Upper lobe of right lung (tissue), 1 donor: ENCODE measurements at regions of chr17 and their contacts with region 1.

Region 1: DNA sequence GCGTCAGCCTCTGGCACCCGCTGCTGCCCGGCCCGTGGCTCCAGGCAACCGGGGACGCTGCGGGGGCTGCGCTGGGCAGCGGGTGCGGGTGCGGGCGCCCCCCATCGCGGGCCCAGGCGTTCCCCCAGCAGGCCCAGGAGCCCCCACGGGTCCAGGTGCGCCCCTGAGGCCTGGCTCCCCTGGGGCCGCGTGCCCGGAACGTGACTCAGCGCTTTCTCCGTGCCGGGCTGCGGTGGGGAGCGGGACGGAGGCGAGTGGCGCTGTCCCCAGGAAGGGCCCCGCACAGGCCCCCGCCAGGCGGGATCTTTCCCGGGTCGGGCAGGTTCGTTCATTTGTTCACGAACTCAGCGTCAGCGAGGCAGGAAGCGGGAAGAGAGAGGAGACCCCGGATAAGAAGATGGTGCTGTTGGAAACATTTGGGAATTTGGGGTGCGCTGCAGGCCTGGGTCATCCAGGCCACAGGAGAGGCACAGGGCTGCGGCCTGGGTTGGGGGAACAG is 18.4 kb upstream of the EXOC7 start:
- DNase-seq: no peak
- ATAC-seq: peak; percentile 30
- H3K4me3 ChIP-seq: peak overlapping the region; percentile 37
- H3K27ac ChIP-seq: peak overlapping the region; percentile 17
- H3K4me1 ChIP-seq: peaks cover 6% of the 10 kb centered on the region
- H3K27me3 ChIP-seq: no peaks in the 10 kb centered on the region
- CTCF ChIP-seq: no peak

Region 2: GRCh38 chr17:75978938-75979704 is 142.9 kb before region 1 on chr17 and contains the starts of genes ACOX1 and TEN1:
- intact Hi-C with region 1: no loop called
- DNase-seq: peak; percentile 99
- ATAC-seq: peak; percentile 96
- H3K4me3 ChIP-seq: peak within 1 kb of the TSS; percentile 93
- H3K27ac ChIP-seq: peak within 1 kb of the TSS; percentile 100
- H3K4me1 ChIP-seq: peaks cover 71% of the 10 kb centered on the region
- H3K27me3 ChIP-seq: no peaks in the 10 kb centered on the region
- CTCF ChIP-seq: peak; percentile 42
- total RNA-seq, gene ACOX1: 75.2 TPM
- total RNA-seq, gene TEN1: 10.9 TPM

Region 3: GRCh38 chr17:76182016-76182764 is 60.2 kb after region 1 on chr17:
- intact Hi-C with region 1: loop called (anchors 10 kb)
- DNase-seq: peak; percentile 89
- ATAC-seq: peak; percentile 98
- H3K4me3 ChIP-seq: no peak overlapping the region
- H3K27ac ChIP-seq: no peak overlapping the region
- H3K4me1 ChIP-seq: no peaks in the 10 kb centered on the region
- H3K27me3 ChIP-seq: no peaks in the 10 kb centered on the region
- CTCF ChIP-seq: peak; percentile 91

Region 4: DNA sequence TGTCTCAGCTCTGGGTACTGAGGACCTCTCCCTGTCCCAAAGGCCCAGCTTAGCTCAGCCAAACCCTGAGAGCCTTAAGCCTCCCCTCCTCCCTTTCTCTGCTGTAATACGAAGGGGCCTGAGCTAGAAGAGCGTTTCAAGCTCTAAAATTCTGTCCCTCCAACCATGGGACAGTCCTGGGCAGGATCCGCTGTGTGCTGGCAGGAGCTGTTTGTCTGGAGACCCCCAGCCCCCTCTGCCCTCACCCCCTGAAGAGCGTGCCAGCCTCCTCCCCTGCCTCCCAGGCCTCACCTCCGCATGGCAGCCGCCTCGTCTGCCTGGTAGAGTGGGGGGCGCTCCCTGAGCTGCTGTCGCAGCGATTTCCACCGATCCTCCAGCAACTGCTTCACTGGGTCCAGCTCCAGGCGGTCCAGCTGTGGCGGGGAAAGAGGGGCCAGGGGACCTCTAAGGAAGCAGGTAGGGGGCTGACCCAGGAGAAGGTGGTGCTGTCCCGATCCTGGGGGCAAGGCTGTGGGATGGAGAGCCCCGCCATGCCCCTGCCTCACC is 157.8 kb after region 1 on chr17:
- intact Hi-C with region 1: loop called (anchors 5 kb)
- DNase-seq: no peak
- ATAC-seq: no peak
- H3K4me3 ChIP-seq: no peak overlapping the region
- H3K27ac ChIP-seq: no peak overlapping the region
- H3K4me1 ChIP-seq: peaks cover 6% of the 10 kb centered on the region
- H3K27me3 ChIP-seq: no peaks in the 10 kb centered on the region
- CTCF ChIP-seq: no peak